ENCODE measurements at regions of chr19 and their contacts with region 1.

Region 1: DNA sequence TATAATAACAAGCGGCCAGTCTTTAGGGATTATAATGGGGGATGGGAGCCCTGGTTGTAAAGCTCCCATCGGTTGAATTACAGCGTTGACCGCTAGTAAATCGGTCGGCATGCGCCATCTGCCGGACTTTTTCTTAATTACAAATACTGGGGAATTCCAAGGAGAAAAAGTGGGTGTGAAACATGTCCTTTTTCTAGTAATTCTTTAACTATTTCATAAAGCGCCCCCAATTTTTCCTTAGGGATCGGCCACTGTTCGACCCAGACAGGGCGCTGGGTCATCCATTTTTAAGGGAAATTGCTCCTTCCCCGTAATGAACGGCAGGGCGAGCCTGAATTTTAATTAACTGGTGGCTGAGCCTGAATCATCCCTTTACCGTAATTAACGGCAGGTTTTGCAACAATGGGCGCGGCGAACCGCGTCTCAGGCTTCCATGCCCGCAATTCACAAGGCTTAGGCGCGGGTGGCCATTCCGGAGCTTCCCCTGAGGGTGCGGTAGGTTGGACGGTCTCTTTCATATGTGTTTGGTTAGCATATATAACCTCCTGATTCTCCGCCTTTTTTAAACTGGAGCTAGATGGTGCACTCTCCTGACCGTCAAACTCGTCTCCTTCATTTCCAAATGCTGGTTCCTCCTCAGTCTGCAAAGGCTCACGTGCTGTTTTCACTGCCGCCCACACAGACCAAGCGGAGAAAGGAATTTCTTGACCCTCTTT is 30.2 kb upstream of the EVI5L start:
- DNase-seq: peak; percentile 73 to 86
- H3K4me3 ChIP-seq: peak overlapping the region in 1 of 4 donors; percentile 32
- H3K27ac ChIP-seq: peak overlapping the region in 1 of 5 donors; percentile 32
- H3K4me1 ChIP-seq: peaks cover 0 to 17% (median 17%) of the 10 kb centered on the region in 4 donors
- H3K27me3 ChIP-seq: peaks cover 0 to 71% (median 21%) of the 10 kb centered on the region in 3 donors
- CTCF ChIP-seq: peak in 5 of 7 experiments; percentile 22 to 78 (median 33)
- EP300 ChIP-seq: no peak
- POLR2A ChIP-seq: no peak

Region 2: DNA sequence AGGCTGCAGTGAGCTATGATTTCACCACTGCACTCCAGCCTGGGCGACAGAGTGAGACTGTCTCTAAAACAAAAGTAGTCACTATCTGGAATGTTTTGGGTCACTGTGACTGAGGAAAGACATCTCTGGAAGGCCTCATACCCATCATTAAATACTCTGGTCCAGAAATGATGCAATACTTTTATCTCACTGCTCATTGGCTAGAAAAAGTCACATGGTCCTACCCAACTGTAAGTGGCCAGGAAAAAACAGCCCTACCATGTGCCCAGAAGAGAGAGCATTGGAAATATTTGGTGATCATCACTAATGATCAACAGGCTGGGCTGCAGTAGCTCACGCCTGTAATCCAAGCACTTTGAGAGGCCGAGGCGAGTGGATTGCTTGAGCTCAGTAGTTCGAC is 234.5 kb before region 1 on chr19:
- intact Hi-C with region 1: loop called (anchors 5 kb)
- DNase-seq: no peak
- H3K4me3 ChIP-seq: no peak overlapping the region
- H3K27ac ChIP-seq: no peak overlapping the region
- H3K4me1 ChIP-seq: peaks cover 0 to 9% (median 0%) of the 10 kb centered on the region in 4 donors
- H3K27me3 ChIP-seq: no peaks in the 10 kb centered on the region
- CTCF ChIP-seq: no peak
- EP300 ChIP-seq: no peak
- POLR2A ChIP-seq: no peak

Region 3: GRCh38 chr19:7652061-7652641 is 147.6 kb before region 1 on chr19:
- intact Hi-C with region 1: loop called (anchors 5 kb)
- DNase-seq: peak; percentile 91 to 93
- H3K4me3 ChIP-seq: peak overlapping the region in 2 of 4 donors; percentile 13 to 29
- H3K27ac ChIP-seq: peak overlapping the region in 4 of 5 donors; percentile 11 to 78 (median 47)
- H3K4me1 ChIP-seq: peaks cover 0 to 17% (median 14%) of the 10 kb centered on the region in 4 donors
- H3K27me3 ChIP-seq: peaks cover 0 to 13% (median 0%) of the 10 kb centered on the region in 3 donors
- CTCF ChIP-seq: peak in 6 of 7 experiments; percentile 63 to 99 (median 98)
- EP300 ChIP-seq: no peak
- POLR2A ChIP-seq: no peak

Region 4: DNA sequence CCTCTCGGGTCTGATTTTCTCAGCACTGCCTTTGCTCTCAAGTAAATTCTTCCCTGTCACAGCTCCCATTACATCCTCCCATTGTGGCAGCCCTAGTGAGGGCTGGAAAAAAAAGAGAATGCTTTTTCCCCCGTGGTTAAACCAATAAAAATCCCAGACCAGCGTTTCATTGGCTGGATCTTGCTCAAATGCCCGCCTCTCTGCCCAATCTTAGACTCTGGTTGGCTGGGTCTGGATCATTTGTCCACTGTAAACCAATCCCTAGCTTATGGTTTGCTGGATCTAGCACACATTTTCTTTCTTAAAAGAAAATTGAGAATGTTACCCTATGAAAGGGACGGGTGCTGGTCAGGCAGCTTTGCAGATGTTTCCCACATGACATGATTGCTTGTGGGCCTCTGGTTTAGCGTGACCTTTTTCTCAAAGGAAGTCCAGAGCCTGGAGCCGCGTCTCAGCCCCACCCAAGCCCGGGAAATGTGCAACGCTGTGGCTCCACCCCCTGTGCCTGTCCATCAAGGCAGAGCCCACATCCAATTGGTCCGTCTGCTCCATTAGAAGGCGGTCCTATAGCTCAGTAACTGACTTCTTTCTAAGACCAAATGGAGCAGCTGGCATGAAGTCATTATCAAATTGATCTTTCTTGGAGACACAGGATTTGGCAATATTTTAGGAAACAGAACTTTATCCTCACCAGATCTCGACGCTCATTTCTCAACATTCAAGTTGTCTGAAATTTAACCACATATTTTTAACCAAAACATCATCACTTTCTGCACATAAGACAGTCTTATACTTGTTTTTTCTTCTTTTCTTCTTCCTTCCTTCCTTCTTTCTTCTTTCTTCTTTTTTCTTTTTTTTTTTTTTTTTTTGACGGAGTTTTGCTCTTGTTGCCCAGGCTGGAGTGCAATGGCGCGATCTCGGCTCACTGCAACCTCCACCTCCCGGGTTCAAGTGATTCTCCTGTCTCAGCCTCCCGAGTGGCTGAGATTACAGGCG is 125.5 kb before region 1 on chr19:
- intact Hi-C with region 1: no loop called
- DNase-seq: peak; percentile 70 to 78
- H3K4me3 ChIP-seq: no peak overlapping the region
- H3K27ac ChIP-seq: peak overlapping the region in 2 of 5 donors; percentile 46 to 50
- H3K4me1 ChIP-seq: peaks cover 0 to 13% (median 4%) of the 10 kb centered on the region in 4 donors
- H3K27me3 ChIP-seq: peaks cover 0 to 86% (median 47%) of the 10 kb centered on the region in 3 donors
- CTCF ChIP-seq: no peak
- EP300 ChIP-seq: no peak
- POLR2A ChIP-seq: no peak